A549 (cell line): ENCODE measurements at regions of chr3 and their contacts with region 1.

Region 1: DNA sequence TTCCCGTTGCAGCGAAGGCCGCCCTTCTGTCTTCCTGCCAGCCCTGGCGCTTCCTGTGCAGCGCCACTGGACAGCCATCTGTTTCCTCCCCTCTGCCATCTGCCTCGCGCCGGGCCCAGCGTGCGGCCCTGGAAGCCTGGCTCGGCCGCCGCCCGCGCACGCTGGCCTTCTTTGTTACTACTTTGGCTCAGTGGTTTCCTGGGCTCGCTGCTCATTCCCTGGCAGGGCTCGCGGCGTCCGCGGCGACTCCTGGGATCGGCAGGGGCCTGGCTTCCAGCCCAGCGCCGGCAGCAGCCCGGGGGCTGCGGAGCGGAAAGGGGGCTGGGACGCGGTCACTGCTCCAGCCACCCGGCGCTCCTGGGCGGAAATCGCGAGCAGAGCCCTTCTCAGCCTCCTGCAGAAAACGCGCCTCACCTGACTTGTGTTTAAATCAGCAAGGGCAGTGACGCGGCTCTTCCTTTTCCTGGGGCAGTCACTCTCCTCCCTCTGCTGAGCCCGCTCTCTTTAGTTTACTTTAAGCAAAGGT is 10.0 kb downstream of the CMTM7 start:
- DNase-seq: peak; percentile 52 to 64
- ATAC-seq: peak; percentile 91 to 93
- H3K4me3 ChIP-seq: peak overlapping the region; percentile 42
- H3K27ac ChIP-seq: peak overlapping the region; percentile 92 to 97
- H3K4me1 ChIP-seq: peaks cover 14% of the 10 kb centered on the region; the same call in 2 of the 3 replicates
- CTCF ChIP-seq: no peak
- EP300 ChIP-seq: no peak
- POLR2A ChIP-seq: no peak; the same call in 1 of the 2 replicates
- RAD21 ChIP-seq: no peak

Region 2: DNA sequence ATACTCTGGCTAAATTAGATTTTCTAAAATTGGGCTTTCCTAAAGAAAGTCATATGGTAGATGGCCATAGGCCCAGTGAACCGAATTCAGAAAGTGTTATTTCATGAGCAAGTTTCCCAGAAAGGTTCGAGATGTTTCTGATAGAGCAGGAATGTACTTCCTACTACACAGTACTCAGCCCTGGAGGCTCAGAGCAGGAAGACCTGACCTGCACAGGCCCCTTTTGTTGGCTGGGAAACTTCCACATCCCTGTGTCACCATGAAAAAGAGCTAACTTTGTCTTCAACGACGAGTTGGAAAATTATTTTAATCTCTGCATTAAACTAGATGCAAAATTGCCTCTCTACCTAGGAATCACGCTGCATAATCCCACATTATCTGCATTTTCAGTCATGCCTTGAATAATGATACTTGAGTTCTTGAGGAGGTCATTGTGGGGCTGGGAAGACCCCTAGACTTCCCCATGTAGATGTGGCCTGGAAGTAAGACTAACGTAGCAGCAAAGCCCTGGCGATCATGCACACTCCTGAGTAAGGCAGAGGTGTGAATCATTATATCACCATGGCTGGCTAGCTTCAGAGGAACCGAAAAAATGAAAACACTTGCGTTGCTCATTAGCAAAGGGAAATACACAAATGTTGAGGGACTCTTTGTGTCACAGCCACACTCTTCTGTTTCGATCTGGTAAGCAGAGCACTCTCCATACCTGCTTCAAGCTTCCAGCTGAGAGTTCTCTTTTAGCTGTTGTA is 37.2 kb after region 1 on chr3:
- CTCF ChIA-PET with region 1: no interaction called
- POLR2A ChIA-PET with region 1: interaction called, 10 read pairs
- DNase-seq: no peak
- ATAC-seq: no peak
- H3K4me3 ChIP-seq: no peak overlapping the region
- H3K27ac ChIP-seq: no peak overlapping the region
- H3K4me1 ChIP-seq: no peaks in the 10 kb centered on the region
- CTCF ChIP-seq: no peak
- EP300 ChIP-seq: no peak
- POLR2A ChIP-seq: no peak
- RAD21 ChIP-seq: no peak